ENCODE measurements at regions of chr19 and their contacts with region 1.

Region 1: GRCh38 chr19:58519355-58520256 is at the start of gene ZBTB45:
- DNase-seq: peak; percentile 94 to 95
- H3K4me3 ChIP-seq: peak within 1 kb of the TSS; percentile 55
- H3K4me3 Mint-ChIP-seq: peak within 1 kb of the TSS; percentile 85
- H3K27ac Mint-ChIP-seq: peak within 1 kb of the TSS; percentile 85
- H3K4me1 ChIP-seq: peaks cover 13% of the 10 kb centered on the region
- H3K4me1 Mint-ChIP-seq: peaks cover 20% of the 10 kb centered on the region
- H3K27me3 ChIP-seq: no peaks in the 10 kb centered on the region
- H3K27me3 Mint-ChIP-seq: no peaks in the 10 kb centered on the region
- CTCF ChIP-seq: peak; percentile 64 to 93
- total RNA-seq, gene ZBTB45: 14.6 and 14.8 TPM in 2 replicates

Region 2: DNA sequence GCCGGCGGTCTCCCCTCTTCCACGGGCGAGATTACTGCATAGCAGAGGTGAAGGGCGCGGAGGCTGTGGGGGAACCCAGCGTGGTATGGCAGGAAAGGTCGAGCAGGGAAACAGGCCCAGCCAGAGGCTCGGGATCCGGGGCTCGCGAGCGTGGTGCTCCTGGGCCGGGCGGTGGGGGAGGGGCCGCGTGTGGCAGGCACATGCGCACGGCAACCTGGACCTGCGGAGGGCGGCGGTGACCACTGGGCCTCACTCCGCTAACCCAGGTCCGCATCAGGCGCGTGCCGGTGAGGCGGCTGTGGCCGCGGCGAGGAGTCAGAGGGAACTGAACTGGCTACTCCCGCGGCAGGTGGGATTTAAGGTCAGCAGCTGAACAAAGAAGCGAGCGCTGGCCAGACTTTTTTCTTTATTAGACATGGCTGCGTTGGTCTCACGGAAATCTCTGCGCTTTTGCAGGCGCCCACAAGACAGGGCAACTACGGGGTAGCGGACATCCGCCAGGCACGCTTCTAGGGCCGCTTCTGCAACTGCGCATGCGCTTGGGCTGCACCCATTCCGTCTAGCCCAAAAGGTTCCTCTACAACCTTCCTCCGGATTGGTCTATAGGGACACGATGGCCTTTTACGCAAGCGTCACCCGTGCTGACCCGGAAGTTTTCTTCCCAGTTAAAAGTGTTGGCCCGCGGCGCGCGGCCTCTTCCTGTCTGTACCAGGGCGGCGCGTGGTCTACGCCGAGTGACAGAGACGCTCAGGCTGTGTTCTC is 132.8 kb before region 1 on chr19 and contains the start of gene RPS5:
- CTCF ChIA-PET with region 1: no interaction called
- POLR2A ChIA-PET with region 1: no interaction called
- intact Hi-C with region 1: loop called (anchors 2 kb)
- DNase-seq: peak; percentile 97 to 98
- H3K4me3 ChIP-seq: peak within 1 kb of the TSS; percentile 79
- H3K4me3 Mint-ChIP-seq: peak within 1 kb of the TSS; percentile 85
- H3K27ac Mint-ChIP-seq: peak within 1 kb of the TSS; percentile 96
- H3K4me1 ChIP-seq: peaks cover 18% of the 10 kb centered on the region
- H3K4me1 Mint-ChIP-seq: peaks cover 12% of the 10 kb centered on the region
- H3K27me3 ChIP-seq: no peaks in the 10 kb centered on the region
- H3K27me3 Mint-ChIP-seq: no peaks in the 10 kb centered on the region
- CTCF ChIP-seq: no peak
- total RNA-seq, gene RPS5: 1,436 and 1,611 TPM in 2 replicates

Region 3: GRCh38 chr19:58416604-58417003 is 103.0 kb before region 1 on chr19:
- CTCF ChIA-PET with region 1: no interaction called
- POLR2A ChIA-PET with region 1: no interaction called
- intact Hi-C with region 1: no loop called
- DNase-seq: no peak
- H3K4me3 ChIP-seq: no peak overlapping the region
- H3K4me3 Mint-ChIP-seq: no peak overlapping the region
- H3K27ac Mint-ChIP-seq: no peak overlapping the region
- H3K4me1 ChIP-seq: no peaks in the 10 kb centered on the region
- H3K4me1 Mint-ChIP-seq: no peaks in the 10 kb centered on the region
- H3K27me3 ChIP-seq: no peaks in the 10 kb centered on the region
- H3K27me3 Mint-ChIP-seq: no peaks in the 10 kb centered on the region
- CTCF ChIP-seq: no peak

Region 4: DNA sequence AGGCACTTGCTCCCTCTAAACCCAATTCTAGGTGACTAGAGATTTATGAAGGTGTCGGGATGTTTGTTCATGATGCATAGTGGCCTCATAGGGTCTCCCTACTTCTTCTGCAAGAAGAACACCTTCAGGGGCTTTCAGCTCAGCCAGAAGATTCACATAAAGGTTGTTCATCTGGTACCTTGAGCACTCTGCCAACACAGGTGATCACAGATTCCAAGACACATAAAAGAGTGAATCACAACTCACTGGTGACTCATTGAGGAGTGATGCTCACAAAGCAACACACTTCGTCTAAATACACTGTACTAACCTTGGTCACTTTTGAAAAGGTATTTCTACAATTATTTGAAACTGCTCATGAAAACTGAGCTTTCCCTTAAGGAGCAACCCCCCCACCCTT is 59.6 kb before region 1 on chr19:
- CTCF ChIA-PET with region 1: no interaction called
- POLR2A ChIA-PET with region 1: no interaction called
- intact Hi-C with region 1: no loop called
- DNase-seq: no peak
- H3K4me3 ChIP-seq: no peak overlapping the region
- H3K4me3 Mint-ChIP-seq: no peak overlapping the region
- H3K27ac Mint-ChIP-seq: no peak overlapping the region
- H3K4me1 ChIP-seq: no peaks in the 10 kb centered on the region
- H3K4me1 Mint-ChIP-seq: no peaks in the 10 kb centered on the region
- H3K27me3 ChIP-seq: no peaks in the 10 kb centered on the region
- H3K27me3 Mint-ChIP-seq: no peaks in the 10 kb centered on the region
- CTCF ChIP-seq: no peak

Region 5: GRCh38 chr19:58499021-58499927 is 20.3 kb before region 1 on chr19:
- CTCF ChIA-PET with region 1: interaction called, 14 read pairs
- POLR2A ChIA-PET with region 1: no interaction called
- intact Hi-C with region 1: loop called (anchors 1 kb)
- DNase-seq: peak; percentile 100
- H3K4me3 ChIP-seq: peak overlapping the region; percentile 69
- H3K4me3 Mint-ChIP-seq: peak overlapping the region; percentile 78
- H3K27ac Mint-ChIP-seq: peak overlapping the region; percentile 73
- H3K4me1 ChIP-seq: peaks cover 8% of the 10 kb centered on the region; the same call in 1 of the 2 replicates
- H3K4me1 Mint-ChIP-seq: peaks cover 7% of the 10 kb centered on the region
- H3K27me3 ChIP-seq: no peaks in the 10 kb centered on the region
- H3K27me3 Mint-ChIP-seq: no peaks in the 10 kb centered on the region
- CTCF ChIP-seq: peak; percentile 39 to 68

Region 6: GRCh38 chr19:58543826-58544590 is 24.4 kb after region 1 on chr19 and contains the start of gene TRIM28:
- CTCF ChIA-PET with region 1: interaction called, 22 read pairs
- POLR2A ChIA-PET with region 1: interaction called, 37 read pairs
- intact Hi-C with region 1: loop called (anchors 1 kb)
- DNase-seq: peak; percentile 99
- H3K4me3 ChIP-seq: peak within 1 kb of the TSS; percentile 87
- H3K4me3 Mint-ChIP-seq: peak within 1 kb of the TSS; percentile 92
- H3K27ac Mint-ChIP-seq: peak within 1 kb of the TSS; percentile 97
- H3K4me1 ChIP-seq: peaks cover 11% of the 10 kb centered on the region
- H3K4me1 Mint-ChIP-seq: peaks cover 14% of the 10 kb centered on the region
- H3K27me3 ChIP-seq: no peaks in the 10 kb centered on the region
- H3K27me3 Mint-ChIP-seq: peaks cover 9% of the 10 kb centered on the region
- CTCF ChIP-seq: no peak
- total RNA-seq, gene TRIM28: 837 and 863 TPM in 2 replicates

Region 7: DNA sequence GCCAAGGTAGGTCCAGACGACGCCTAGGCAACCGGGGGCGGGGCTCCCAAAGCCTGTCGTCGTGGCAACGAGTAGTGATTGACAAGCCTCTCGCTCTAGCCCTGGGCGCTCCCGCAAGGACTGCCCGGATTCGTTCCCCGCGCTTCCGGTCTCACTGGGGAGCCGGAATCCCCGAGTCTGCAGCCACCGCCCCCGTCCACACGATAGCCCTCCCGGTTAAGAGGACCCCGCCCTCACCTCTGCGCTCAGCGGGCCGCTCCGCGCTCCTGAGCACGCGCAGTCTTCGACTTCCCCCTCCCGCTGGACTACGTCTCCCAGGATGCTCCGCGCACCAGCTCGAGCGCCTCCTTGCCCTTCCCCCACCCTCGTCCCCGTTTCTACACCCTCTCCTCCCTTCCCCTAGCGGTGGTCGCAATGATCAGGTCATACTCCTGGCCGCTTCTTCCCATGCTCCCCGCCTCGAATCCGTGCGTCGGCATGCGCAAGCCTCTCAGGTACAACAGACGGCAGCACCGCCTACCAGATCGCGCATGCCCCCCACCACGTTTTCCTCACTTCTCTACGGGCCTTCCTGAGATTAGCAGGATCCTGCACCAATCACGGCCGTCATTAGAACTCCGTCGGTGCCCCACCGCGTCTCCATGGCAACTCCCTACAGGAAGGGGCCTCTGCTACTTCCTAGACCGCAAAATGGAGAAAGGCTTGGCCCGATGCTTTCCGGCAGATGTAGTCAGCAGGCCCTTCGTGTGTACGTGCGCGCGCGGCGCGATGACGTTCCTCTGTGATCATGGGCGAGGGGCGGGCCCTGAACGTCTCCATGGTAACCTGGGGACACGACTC is 53.4 kb after region 1 on chr19 and contains the start of gene MZF1:
- CTCF ChIA-PET with region 1: interaction called, 3 read pairs
- POLR2A ChIA-PET with region 1: interaction called, 4 read pairs
- intact Hi-C with region 1: loop called (anchors 1 kb)
- DNase-seq: peak; percentile 99 to 100
- H3K4me3 ChIP-seq: peak within 1 kb of the TSS; percentile 67
- H3K4me3 Mint-ChIP-seq: peak within 1 kb of the TSS; percentile 87
- H3K27ac Mint-ChIP-seq: peak within 1 kb of the TSS; percentile 98
- H3K4me1 ChIP-seq: no peaks in the 10 kb centered on the region
- H3K4me1 Mint-ChIP-seq: peaks cover 17% of the 10 kb centered on the region
- H3K27me3 ChIP-seq: no peaks in the 10 kb centered on the region
- H3K27me3 Mint-ChIP-seq: no peaks in the 10 kb centered on the region
- CTCF ChIP-seq: peak in 1 of 2 experiments; percentile 6
- total RNA-seq, gene MZF1: 20.4 and 25.6 TPM in 2 replicates

Region 8: DNA sequence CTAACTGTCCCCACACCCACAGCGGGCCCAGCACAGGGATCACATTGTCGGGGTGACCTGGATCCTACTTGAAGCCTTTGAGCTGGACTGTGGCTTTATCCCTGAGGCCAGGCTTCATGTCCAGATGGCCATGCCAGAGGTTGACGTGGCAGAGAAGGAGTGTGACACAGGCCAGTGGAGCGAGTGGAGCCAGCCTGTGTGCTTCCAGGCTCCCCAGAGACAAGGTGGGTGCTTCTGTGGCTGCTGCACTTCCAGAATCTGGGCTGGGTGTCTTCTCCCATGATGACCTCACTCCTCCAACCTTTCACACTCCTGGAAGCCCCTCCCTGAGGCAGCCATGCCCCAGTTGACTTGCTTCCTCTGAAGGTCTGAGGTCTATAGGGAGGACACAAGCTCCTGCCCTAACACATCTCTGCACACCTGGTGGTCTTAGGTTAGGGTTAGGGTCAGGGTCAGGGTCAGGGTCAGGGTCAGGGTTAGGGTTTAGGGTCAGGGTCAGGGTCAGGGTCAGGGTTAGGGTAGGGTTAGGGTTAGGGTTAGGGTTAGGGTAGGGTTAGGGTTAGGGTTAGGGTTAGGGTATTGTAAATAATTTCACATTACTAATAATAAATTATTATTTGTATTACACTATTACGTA is 66.6 kb after region 1 on chr19:
- CTCF ChIA-PET with region 1: no interaction called
- POLR2A ChIA-PET with region 1: no interaction called
- intact Hi-C with region 1: no loop called
- DNase-seq: no peak
- H3K4me3 ChIP-seq: no peak overlapping the region
- H3K4me3 Mint-ChIP-seq: no peak overlapping the region
- H3K27ac Mint-ChIP-seq: no peak overlapping the region
- H3K4me1 ChIP-seq: no peaks in the 10 kb centered on the region
- H3K4me1 Mint-ChIP-seq: no peaks in the 10 kb centered on the region
- H3K27me3 ChIP-seq: no peaks in the 10 kb centered on the region
- H3K27me3 Mint-ChIP-seq: no peaks in the 10 kb centered on the region
- CTCF ChIP-seq: no peak